B cell (primary cell): ENCODE measurements at regions of chr1 and their contacts with region 1.

Region 1: DNA sequence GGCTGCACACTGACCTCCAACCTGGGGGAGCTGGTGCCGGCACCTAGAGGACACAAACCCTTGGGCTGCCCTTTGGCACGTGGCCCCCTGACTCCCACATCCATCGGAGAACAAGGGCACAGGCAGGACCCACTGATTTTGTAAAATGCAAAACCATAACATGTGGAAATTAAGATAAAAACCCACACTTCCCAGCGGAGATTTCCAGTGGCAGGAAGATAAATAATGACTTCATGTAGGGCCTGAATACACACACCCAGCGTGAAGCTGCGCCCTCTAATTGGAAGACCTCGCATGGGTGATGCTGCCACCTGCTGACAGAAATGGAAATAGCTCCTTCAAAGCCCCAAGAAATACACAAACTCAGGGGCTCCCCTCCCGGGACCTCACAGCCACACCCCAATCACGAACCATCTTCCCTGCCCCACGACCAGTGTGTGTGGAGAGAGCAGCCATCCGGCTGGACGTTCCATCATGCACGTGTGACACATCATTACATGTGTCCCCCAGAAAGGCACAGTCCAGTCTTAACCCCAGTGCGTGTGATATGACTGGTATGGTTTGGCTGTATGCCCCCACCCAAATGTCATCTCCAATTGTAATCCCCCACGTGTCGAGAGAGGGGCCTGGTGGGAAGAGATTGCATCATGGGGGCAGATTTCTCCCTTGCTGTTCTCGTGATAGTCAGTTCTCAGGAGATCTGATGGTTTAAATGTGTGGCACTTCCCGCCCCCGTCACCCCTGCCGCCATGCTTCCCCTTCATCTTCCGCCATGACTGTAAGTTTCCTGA is 5.7 kb upstream of the TPRG1L start:
- DNase-seq: peak; percentile 88
- ATAC-seq: peak; percentile 95
- H3K4me3 ChIP-seq: no peak overlapping the region
- H3K4me3 Mint-ChIP-seq: peak overlapping the region; percentile 67
- H3K27ac ChIP-seq: no peak overlapping the region
- H3K27ac Mint-ChIP-seq: peak overlapping the region; percentile 52
- H3K4me1 ChIP-seq: peaks cover 11 to 23% of the 10 kb centered on the region in 2 donors
- H3K4me1 Mint-ChIP-seq: peaks cover 40% of the 10 kb centered on the region
- H3K27me3 ChIP-seq: peaks cover 0 to 15% (median 0%) of the 10 kb centered on the region in 4 experiments
- H3K27me3 Mint-ChIP-seq: peaks cover 17% of the 10 kb centered on the region
- CTCF ChIP-seq: peak; percentile 91

Region 2: GRCh38 chr1:2391041-2391930 is 1227.8 kb before region 1 on chr1 and contains the starts of genes MORN1 and RER1:
- CTCF ChIA-PET with region 1: no interaction called
- POLR2A ChIA-PET with region 1: no interaction called
- intact Hi-C with region 1: no loop called
- DNase-seq: peak; percentile 99
- ATAC-seq: peak; percentile 94
- H3K4me3 ChIP-seq: peak within 1 kb of the TSS; percentile 61 to 92 (median 76)
- H3K4me3 Mint-ChIP-seq: peak within 1 kb of the TSS; percentile 92
- H3K27ac ChIP-seq: peak within 1 kb of the TSS; percentile 24 to 88
- H3K27ac Mint-ChIP-seq: peak within 1 kb of the TSS; percentile 88
- H3K4me1 ChIP-seq: peaks cover 25 to 47% of the 10 kb centered on the region in 2 donors
- H3K4me1 Mint-ChIP-seq: peaks cover 47% of the 10 kb centered on the region
- H3K27me3 ChIP-seq: no peaks in the 10 kb centered on the region
- H3K27me3 Mint-ChIP-seq: no peaks in the 10 kb centered on the region
- CTCF ChIP-seq: no peak
- total RNA-seq, gene MORN1: 30.4 and 32.6 TPM in 2 replicates
- total RNA-seq, gene RER1: 117 and 118 TPM in 2 replicates

Region 3: GRCh38 chr1:3491291-3492246 is 127.5 kb before region 1 on chr1:
- CTCF ChIA-PET with region 1: interaction called, 69 read pairs
- POLR2A ChIA-PET with region 1: no interaction called
- intact Hi-C with region 1: loop called (anchors 1 kb)
- DNase-seq: peak; percentile 89
- ATAC-seq: peak; percentile 98
- H3K4me3 ChIP-seq: peak overlapping the region in 3 of 5 experiments; percentile 12 to 37 (median 36)
- H3K4me3 Mint-ChIP-seq: peak overlapping the region; percentile 69
- H3K27ac ChIP-seq: no peak overlapping the region
- H3K27ac Mint-ChIP-seq: peak overlapping the region; percentile 10
- H3K4me1 ChIP-seq: peaks cover 0 to 7% of the 10 kb centered on the region in 2 donors
- H3K4me1 Mint-ChIP-seq: peaks cover 6% of the 10 kb centered on the region
- H3K27me3 ChIP-seq: no peaks in the 10 kb centered on the region
- H3K27me3 Mint-ChIP-seq: no peaks in the 10 kb centered on the region
- CTCF ChIP-seq: peak; percentile 100

Region 4: GRCh38 chr1:3530926-3531818 is 87.9 kb before region 1 on chr1:
- CTCF ChIA-PET with region 1: interaction called, 17 read pairs
- POLR2A ChIA-PET with region 1: no interaction called
- intact Hi-C with region 1: loop called (anchors 1 kb)
- DNase-seq: peak; percentile 84
- ATAC-seq: peak; percentile 81
- H3K4me3 ChIP-seq: peak overlapping the region; percentile 45 to 74 (median 61)
- H3K4me3 Mint-ChIP-seq: peak overlapping the region; percentile 86
- H3K27ac ChIP-seq: peak overlapping the region; percentile 52 to 71
- H3K27ac Mint-ChIP-seq: peak overlapping the region; percentile 85
- H3K4me1 ChIP-seq: peaks cover 9 to 14% of the 10 kb centered on the region in 2 donors
- H3K4me1 Mint-ChIP-seq: peaks cover 17% of the 10 kb centered on the region
- H3K27me3 ChIP-seq: no peaks in the 10 kb centered on the region
- H3K27me3 Mint-ChIP-seq: no peaks in the 10 kb centered on the region
- CTCF ChIP-seq: no peak

Region 5: GRCh38 chr1:3543076-3544039 is 75.7 kb before region 1 on chr1:
- CTCF ChIA-PET with region 1: no interaction called
- POLR2A ChIA-PET with region 1: no interaction called
- intact Hi-C with region 1: no loop called
- DNase-seq: no peak
- ATAC-seq: no peak
- H3K4me3 ChIP-seq: no peak overlapping the region
- H3K4me3 Mint-ChIP-seq: no peak overlapping the region
- H3K27ac ChIP-seq: no peak overlapping the region
- H3K27ac Mint-ChIP-seq: no peak overlapping the region
- H3K4me1 ChIP-seq: peaks cover 0 to under 1% of the 10 kb centered on the region in 2 donors
- H3K4me1 Mint-ChIP-seq: no peaks in the 10 kb centered on the region
- H3K27me3 ChIP-seq: no peaks in the 10 kb centered on the region
- H3K27me3 Mint-ChIP-seq: no peaks in the 10 kb centered on the region
- CTCF ChIP-seq: no peak

Region 6: DNA sequence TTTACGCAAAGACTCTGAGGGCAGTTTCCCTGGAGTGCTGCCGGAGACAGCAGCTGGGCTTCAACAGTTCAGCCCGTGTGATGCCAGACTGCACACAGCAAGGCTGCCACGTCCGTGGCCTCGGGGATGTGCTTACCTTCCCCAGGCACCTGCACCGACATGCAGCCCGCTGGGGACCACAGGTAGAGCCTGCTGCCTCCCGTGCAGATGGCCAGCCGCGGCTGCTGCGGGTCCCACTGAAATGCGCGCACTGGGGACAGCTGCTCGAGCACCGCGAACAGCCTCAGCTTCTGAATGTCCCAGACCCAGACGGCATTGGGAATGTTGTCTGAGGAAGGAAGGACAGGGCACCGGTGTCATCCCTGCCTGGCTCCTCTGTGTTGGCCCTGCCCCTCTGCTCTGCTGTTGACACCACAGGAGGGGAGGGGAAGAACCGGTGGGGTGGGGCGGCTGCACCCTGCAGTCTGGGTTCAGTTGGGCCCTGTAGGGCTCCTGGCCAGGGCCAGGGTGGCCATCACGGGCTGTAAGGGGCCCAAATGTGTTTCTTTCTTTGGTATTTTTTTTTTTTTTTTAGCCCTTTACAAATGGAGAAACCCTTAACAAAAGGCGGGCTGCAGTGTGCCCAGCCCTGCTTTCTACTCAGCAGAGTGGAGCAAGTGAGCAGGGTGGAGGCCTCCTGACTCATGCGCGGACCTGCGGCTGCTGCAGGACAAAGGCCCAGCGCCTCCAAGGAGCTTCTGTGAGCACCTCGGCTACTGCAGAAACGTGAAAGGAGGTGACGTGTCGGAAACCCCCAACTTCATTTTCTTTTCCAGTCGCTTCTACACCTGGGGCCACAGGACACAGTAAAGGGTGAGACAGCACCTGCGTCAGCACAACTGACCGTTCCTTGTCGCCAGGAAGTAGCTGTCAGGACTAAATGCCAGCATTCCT is 12.5 kb after region 1 on chr1:
- CTCF ChIA-PET with region 1: interaction called, 37 read pairs
- POLR2A ChIA-PET with region 1: no interaction called
- intact Hi-C with region 1: no loop called
- DNase-seq: no peak
- ATAC-seq: no peak
- H3K4me3 ChIP-seq: no peak overlapping the region
- H3K4me3 Mint-ChIP-seq: no peak overlapping the region
- H3K27ac ChIP-seq: no peak overlapping the region
- H3K27ac Mint-ChIP-seq: no peak overlapping the region
- H3K4me1 ChIP-seq: peaks cover 0 to 4% of the 10 kb centered on the region in 2 donors
- H3K4me1 Mint-ChIP-seq: peaks cover 7% of the 10 kb centered on the region
- H3K27me3 ChIP-seq: no peaks in the 10 kb centered on the region
- H3K27me3 Mint-ChIP-seq: no peaks in the 10 kb centered on the region
- CTCF ChIP-seq: no peak

Region 7: GRCh38 chr1:3668585-3669300 is 49.7 kb after region 1 on chr1:
- CTCF ChIA-PET with region 1: interaction called, 22 read pairs
- POLR2A ChIA-PET with region 1: no interaction called
- intact Hi-C with region 1: no loop called
- DNase-seq: no peak
- ATAC-seq: no peak
- H3K4me3 ChIP-seq: no peak overlapping the region
- H3K4me3 Mint-ChIP-seq: no peak overlapping the region
- H3K27ac ChIP-seq: no peak overlapping the region
- H3K27ac Mint-ChIP-seq: peak overlapping the region; percentile 18
- H3K4me1 ChIP-seq: peaks cover 59 to 68% of the 10 kb centered on the region in 2 donors
- H3K4me1 Mint-ChIP-seq: peaks cover 64% of the 10 kb centered on the region
- H3K27me3 ChIP-seq: peaks cover 0 to 10% (median 0%) of the 10 kb centered on the region in 4 experiments
- H3K27me3 Mint-ChIP-seq: no peaks in the 10 kb centered on the region
- CTCF ChIP-seq: no peak

Region 8: DNA sequence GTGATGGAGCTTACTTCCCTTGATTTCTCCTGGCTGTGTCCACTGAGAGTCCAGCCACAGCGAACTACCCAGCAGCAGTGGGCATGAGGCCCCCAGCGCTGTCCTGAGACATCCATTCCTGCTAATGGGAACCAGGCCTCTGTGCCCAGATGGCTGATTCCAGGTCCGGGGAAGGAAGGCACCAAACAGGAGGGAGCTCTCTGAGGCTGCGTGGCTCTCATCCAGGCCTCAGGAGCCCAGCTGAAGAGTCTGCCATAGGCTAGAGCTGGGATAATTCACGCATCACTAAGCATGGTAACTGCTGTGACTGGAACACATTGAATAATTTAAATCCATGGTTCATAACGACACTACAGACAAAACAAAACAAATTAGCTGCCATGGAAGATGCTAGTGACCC is 201.9 kb after region 1 on chr1:
- CTCF ChIA-PET with region 1: no interaction called
- POLR2A ChIA-PET with region 1: no interaction called
- intact Hi-C with region 1: no loop called
- DNase-seq: no peak
- ATAC-seq: no peak
- H3K4me3 ChIP-seq: no peak overlapping the region
- H3K4me3 Mint-ChIP-seq: no peak overlapping the region
- H3K27ac ChIP-seq: no peak overlapping the region
- H3K27ac Mint-ChIP-seq: no peak overlapping the region
- H3K4me1 ChIP-seq: no peaks in the 10 kb centered on the region
- H3K4me1 Mint-ChIP-seq: no peaks in the 10 kb centered on the region
- H3K27me3 ChIP-seq: no peaks in the 10 kb centered on the region
- H3K27me3 Mint-ChIP-seq: no peaks in the 10 kb centered on the region
- CTCF ChIP-seq: no peak

Region 9: DNA sequence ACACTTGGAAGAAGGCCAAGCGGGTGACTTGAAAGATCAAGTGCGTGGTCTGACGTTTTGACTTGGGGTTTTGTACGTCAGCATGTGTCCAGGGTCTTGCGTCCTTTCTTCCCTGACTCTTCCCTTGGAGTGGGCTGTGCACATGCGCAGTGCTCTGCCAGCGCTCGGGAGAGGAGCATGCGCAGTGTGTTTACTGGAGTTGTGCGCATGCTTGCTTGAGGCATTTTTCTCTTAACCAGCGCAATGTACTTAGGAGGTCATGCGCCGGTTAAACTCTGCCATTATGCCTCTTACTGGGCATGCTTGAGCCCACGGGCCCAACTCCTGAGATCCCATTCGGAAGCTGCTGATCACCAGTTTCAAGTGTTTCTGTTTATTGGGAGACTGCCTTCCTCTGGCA is 792.8 kb after region 1 on chr1:
- CTCF ChIA-PET with region 1: no interaction called
- POLR2A ChIA-PET with region 1: no interaction called
- intact Hi-C with region 1: no loop called
- DNase-seq: no peak
- ATAC-seq: no peak
- H3K4me3 ChIP-seq: no peak overlapping the region
- H3K4me3 Mint-ChIP-seq: no peak overlapping the region
- H3K27ac ChIP-seq: no peak overlapping the region
- H3K27ac Mint-ChIP-seq: no peak overlapping the region
- H3K4me1 ChIP-seq: no peaks in the 10 kb centered on the region
- H3K4me1 Mint-ChIP-seq: no peaks in the 10 kb centered on the region
- H3K27me3 ChIP-seq: no peaks in the 10 kb centered on the region
- H3K27me3 Mint-ChIP-seq: no peaks in the 10 kb centered on the region
- CTCF ChIP-seq: no peak